ENCODE measurements at regions of chr6 and their contacts with region 1.

Region 1: DNA sequence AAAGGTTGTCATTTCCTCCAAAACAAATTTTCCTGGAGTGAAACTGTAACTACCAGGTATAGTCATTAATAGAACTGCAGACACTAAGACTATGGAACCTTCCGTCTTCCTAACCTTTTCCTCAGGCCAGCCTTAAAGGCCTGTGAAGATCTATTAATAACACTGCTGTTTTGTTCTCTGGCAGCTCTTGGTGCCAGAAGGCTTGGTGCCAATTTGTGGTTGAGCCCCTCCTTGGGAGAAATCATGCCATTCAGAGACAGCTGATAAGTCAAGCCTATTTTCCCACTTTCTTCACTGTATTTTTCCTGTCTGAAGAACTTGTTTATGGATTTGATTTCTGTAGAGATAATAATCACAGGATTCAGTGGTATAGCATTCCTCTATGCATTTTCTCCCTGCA is 64.8 kb downstream of the HCRTR2 start:
- DNase-seq: peak; percentile 8
- H3K4me3 ChIP-seq: no peak overlapping the region
- H3K27ac ChIP-seq: no peak overlapping the region
- H3K4me1 ChIP-seq: no peaks in the 10 kb centered on the region
- H3K27me3 ChIP-seq: peaks cover 7% of the 10 kb centered on the region
- CTCF ChIP-seq: no peak

Region 2: GRCh38 chr6:53979468-53980067 is 1259.5 kb before region 1 on chr6:
- CTCF ChIA-PET with region 1: no interaction called
- dilution Hi-C with region 1: no loop called
- in situ Hi-C with region 1: loop called (anchors 10 to 25 kb)
- intact Hi-C with region 1: loop called (anchors 1 kb)
- DNase-seq: no peak
- H3K4me3 ChIP-seq: no peak overlapping the region
- H3K27ac ChIP-seq: no peak overlapping the region
- H3K4me1 ChIP-seq: peaks cover 21% of the 10 kb centered on the region
- H3K27me3 ChIP-seq: no peaks in the 10 kb centered on the region
- CTCF ChIP-seq: peak; percentile 79

Region 3: GRCh38 chr6:54267798-54268197 is 971.3 kb before region 1 on chr6:
- CTCF ChIA-PET with region 1: no interaction called
- dilution Hi-C with region 1: no loop called
- in situ Hi-C with region 1: no loop called
- intact Hi-C with region 1: loop called (anchors 10 kb)
- DNase-seq: peak; percentile 19
- H3K4me3 ChIP-seq: no peak overlapping the region
- H3K27ac ChIP-seq: no peak overlapping the region
- H3K4me1 ChIP-seq: no peaks in the 10 kb centered on the region
- H3K27me3 ChIP-seq: no peaks in the 10 kb centered on the region
- CTCF ChIP-seq: peak; percentile 58 to 63

Region 4: DNA sequence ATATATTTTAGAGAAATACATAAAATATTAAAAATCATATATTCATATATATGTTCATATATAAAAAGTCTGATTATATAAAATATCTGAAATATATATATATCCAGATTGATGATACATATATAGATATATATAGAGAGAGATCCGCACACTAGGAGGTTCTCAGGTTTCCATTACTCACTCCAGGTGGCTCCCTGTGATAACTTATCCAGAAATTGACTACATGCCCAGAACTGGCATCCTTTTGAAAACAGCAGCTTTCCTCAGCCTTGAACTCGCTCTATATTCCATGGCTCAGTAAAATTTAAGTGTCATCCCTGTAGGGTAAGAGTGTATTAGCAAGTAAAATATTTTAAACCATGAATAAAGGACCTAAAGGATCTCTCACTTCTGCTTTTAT is 724.1 kb before region 1 on chr6:
- CTCF ChIA-PET with region 1: interaction called, 7 read pairs
- dilution Hi-C with region 1: no loop called
- in situ Hi-C with region 1: no loop called
- intact Hi-C with region 1: loop called (anchors 10 kb)
- DNase-seq: peak; percentile 54
- H3K4me3 ChIP-seq: no peak overlapping the region
- H3K27ac ChIP-seq: no peak overlapping the region
- H3K4me1 ChIP-seq: peaks cover 4% of the 10 kb centered on the region
- H3K27me3 ChIP-seq: no peaks in the 10 kb centered on the region
- CTCF ChIP-seq: peak in 1 of 2 donors; percentile 33

Region 5: DNA sequence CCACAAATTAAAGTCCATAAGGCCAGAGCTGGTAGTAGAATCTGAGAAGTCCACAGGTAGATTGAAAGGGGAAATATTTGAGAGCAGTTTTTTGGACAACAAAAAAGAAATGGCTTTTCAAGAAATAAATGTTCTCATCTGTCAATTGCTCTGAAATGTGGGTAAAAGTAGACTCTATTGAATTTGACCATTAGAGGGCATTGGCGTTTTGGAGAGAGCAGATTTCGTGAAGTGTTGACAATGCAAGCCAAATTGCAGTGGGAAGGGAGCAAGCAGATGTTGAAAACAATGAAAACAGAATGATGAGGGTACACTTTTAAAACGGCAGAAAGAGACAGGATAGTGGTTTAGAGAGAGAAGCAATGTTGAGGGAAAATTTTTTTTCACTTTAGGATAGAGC is 541.7 kb before region 1 on chr6:
- CTCF ChIA-PET with region 1: no interaction called
- dilution Hi-C with region 1: no loop called
- in situ Hi-C with region 1: no loop called
- intact Hi-C with region 1: loop called (anchors 5 kb)
- DNase-seq: peak; percentile 37
- H3K4me3 ChIP-seq: no peak overlapping the region
- H3K27ac ChIP-seq: no peak overlapping the region
- H3K4me1 ChIP-seq: peaks cover 23% of the 10 kb centered on the region
- H3K27me3 ChIP-seq: no peaks in the 10 kb centered on the region
- CTCF ChIP-seq: peak; percentile 46 to 67

Region 6: DNA sequence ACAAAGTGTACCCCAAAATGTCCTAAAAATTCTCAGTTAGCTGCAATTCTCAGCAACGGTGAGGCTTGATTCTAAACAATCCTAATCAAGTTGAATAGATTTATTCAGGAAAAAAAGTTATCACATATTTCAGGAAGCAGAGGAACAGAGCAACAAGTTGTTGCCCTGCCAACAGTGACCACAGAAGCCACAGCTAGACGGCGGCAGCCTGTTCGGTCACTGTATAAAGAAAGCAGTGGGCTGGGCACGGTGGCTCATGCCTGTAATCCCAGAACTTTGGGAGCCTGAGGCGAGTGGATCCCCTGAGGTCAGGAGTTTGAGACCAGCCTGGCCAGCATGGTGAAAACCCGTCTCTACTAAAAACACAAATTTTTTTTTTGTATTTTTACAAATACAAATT is 807.5 kb after region 1 on chr6:
- CTCF ChIA-PET with region 1: no interaction called
- dilution Hi-C with region 1: no loop called
- in situ Hi-C with region 1: no loop called
- intact Hi-C with region 1: no loop called
- DNase-seq: peak; percentile 87
- H3K4me3 ChIP-seq: no peak overlapping the region
- H3K27ac ChIP-seq: peak overlapping the region; percentile 18
- H3K4me1 ChIP-seq: peaks cover 4% of the 10 kb centered on the region
- H3K27me3 ChIP-seq: no peaks in the 10 kb centered on the region
- CTCF ChIP-seq: no peak